ENCODE measurements at regions of chr6 and their contacts with region 1.

Region 1: GRCh38 chr6:7615611-7616383 is 25.8 kb downstream of the SNRNP48 start:
- DNase-seq: peak; percentile 48
- H3K4me3 ChIP-seq: no peak overlapping the region
- H3K27ac ChIP-seq: no peak overlapping the region
- H3K4me1 ChIP-seq: peaks cover 4% of the 10 kb centered on the region
- H3K27me3 ChIP-seq: no peaks in the 10 kb centered on the region
- CTCF ChIP-seq: peak; percentile 29 to 81 (median 77)
- POLR2A ChIP-seq: no peak

Region 2: DNA sequence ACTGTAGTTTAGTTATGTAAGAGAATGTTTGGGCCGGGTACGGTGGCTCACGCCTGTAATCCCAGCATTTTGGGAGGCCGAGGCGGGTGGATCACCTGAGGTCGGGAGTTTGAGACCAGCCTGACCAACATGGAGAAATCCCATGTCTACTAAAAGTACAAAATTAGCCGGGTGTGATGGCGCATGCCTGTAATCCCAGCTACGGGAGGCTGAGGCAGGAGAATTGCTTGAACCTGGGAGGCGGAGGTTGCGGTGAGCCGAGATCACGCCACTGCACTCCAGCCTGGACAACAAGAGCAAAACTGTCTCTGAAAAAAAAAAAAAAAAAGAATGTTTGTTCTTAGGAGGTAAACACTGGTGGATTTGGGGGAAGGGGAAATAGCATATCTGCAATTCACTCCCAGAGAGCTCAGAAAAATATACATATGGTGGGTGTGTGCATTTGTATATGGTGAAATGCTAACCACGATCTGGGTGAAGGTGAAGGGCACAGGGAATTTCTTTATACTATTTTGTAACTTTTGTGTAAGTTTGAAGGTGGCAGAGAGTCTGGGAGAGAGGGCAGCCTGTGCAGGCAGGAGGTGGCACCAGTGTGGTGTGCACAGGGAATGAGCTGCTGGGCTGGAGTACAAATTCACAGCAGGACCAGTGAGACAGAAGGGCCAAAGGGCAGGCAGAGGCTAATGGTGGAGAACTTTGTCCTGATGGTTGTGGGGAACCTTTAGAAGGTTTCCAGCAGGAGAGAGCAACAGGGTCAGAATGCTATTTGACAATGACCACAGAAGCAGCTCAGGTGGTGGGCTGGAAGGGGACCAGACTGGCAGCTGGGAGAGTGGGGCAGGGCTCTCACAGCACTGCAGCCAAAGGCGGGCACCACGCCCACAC is 345.2 kb before region 1 on chr6:
- intact Hi-C with region 1: loop called (anchors 10 kb)
- DNase-seq: no peak
- H3K4me3 ChIP-seq: no peak overlapping the region
- H3K27ac ChIP-seq: no peak overlapping the region
- H3K4me1 ChIP-seq: no peaks in the 10 kb centered on the region
- H3K27me3 ChIP-seq: no peaks in the 10 kb centered on the region
- CTCF ChIP-seq: no peak
- POLR2A ChIP-seq: no peak

Region 3: DNA sequence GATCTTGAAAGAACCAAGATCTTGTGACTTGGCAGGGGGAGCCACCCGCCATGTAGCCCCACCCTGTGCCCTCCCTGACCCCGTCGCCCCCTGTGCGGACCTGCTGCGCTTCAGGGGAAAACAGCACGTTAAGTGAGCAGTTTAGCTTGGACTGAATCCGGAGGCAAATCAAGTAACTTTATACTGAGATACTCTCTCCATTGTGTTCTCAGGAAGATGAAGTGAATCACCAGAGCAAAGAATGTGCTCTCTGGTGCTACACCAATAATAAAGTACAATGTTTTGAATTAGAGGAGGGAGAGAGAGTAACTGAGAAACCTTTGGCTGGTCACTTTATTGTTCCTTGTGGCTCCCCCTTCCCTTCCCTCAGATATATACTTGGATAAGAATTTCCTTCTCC is 211.3 kb after region 1 on chr6:
- intact Hi-C with region 1: no loop called
- DNase-seq: no peak
- H3K4me3 ChIP-seq: no peak overlapping the region
- H3K27ac ChIP-seq: no peak overlapping the region
- H3K4me1 ChIP-seq: no peaks in the 10 kb centered on the region
- H3K27me3 ChIP-seq: no peaks in the 10 kb centered on the region
- CTCF ChIP-seq: no peak
- POLR2A ChIP-seq: no peak

Region 4: DNA sequence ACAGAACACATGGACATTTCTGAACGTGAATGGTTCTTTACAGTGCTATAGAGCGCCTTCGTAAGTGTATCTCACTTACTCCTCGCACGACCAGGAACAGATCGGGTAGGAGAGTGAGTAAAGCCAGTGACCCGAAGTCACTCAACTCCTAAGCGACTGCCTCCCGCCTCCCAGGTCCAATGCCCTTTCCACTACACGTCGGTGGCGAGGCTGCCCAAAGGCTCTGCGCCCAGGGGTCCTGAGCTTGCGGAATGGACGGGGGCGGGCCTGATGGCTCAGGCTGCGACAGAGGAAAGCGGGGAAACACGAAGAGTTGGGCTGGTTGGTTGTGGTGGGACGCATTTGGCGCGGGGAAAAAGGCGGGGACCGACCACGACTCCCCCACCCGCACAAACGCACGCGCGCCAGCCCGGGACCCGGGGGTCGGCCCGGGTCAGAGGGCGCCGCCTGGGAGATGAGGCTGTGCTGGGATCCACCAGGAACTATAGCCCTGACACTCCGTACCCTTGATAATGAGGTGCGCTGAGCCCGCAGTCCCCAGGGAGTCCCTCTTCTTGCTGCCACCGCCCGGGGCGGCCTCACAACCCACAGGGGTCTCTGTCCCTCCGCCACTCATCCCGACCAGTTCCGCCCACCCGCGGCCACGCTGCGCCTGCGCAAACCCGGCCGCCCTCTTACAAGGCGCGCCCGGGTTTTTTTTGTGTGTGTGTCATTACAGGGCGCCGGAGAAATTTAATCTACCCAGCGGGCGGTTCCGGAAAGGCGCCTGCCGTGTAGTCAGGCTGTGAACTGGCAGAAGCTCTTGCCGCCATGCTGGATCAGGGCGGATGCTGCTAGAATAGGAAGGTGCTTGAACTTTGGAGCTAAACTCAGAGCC is 448.2 kb after region 1 on chr6 and contains the start of gene BLOC1S5:
- intact Hi-C with region 1: no loop called
- DNase-seq: peak; percentile 98
- H3K4me3 ChIP-seq: peak within 1 kb of the TSS; percentile 90 to 92
- H3K27ac ChIP-seq: peak within 1 kb of the TSS; percentile 45 to 89
- H3K4me1 ChIP-seq: no peaks in the 10 kb centered on the region
- H3K27me3 ChIP-seq: no peaks in the 10 kb centered on the region
- CTCF ChIP-seq: peak in 2 of 3 experiments; percentile 32 to 52
- POLR2A ChIP-seq: no peak
- total RNA-seq, gene BLOC1S5: 10.9 to 12.1 TPM